Activated B cell treated with CpG ODN at 0.5 μM for 24 hours (primary cell): ENCODE measurements at regions of chr2 and their contacts with region 1.

Region 1: DNA sequence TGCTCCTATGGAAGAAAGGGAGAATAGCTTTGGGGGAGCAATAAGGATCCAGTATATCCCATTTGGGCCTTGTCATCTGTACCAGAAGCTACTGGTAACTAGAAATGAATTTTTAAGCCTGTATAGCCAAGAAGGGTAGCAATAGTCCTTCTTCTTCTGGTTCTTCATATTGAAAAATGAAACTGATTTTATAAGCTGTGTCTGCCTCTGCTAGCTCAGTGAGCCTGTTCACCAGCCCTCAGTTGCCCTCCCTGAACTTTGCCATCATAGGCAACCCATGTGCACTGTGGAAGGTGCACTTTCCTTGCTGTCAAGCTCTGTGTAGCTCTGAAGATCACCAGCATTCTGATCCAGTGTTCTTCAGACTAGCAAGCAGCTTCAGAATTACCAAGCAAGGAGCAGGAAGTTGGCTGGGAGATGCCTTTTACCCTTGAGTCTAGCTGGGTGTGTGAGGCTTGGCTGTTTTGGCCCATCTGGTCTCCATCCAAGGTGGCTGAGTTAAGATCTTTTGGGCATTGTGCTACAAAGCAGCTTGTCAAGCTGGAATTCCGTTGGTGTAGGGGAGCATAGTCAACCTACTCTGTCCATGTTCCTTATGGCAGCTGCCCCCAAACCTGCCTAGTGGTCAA is 55.8 kb upstream of the MGAT5 start:
- DNase-seq: no peak
- ATAC-seq: peak; percentile 25
- H3K4me3 Mint-ChIP-seq: peak overlapping the region; percentile 53
- H3K27ac Mint-ChIP-seq: peak overlapping the region; percentile 60
- H3K4me1 Mint-ChIP-seq: peaks cover 87% of the 10 kb centered on the region
- H3K27me3 Mint-ChIP-seq: no peaks in the 10 kb centered on the region
- CTCF ChIP-seq: no peak

Region 2: DNA sequence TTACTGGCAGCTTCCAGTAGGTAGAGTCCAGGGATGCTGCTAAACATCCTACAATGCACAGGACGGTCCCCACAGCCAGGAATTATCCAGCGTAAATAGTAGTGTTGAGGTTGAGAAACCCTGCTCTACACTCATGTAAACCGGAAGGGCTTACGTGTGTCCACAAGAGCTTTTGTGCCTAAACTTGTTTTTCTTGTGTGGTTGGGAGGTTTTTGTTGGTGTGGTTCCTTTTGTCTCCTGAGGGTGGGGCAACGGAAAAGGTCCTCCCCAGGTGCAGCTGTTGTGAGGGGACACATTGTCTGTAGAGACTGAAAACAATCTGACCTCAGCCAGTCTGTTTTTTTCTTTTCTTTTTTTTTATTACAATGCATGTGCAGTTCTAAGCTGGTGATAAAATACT is 16.9 kb before region 1 on chr2:
- CTCF ChIA-PET with region 1: no interaction called
- POLR2A ChIA-PET with region 1: no interaction called
- intact Hi-C with region 1: loop called (anchors 1 kb)
- DNase-seq: no peak
- ATAC-seq: peak; percentile 43
- H3K4me3 Mint-ChIP-seq: peak overlapping the region; percentile 35
- H3K27ac Mint-ChIP-seq: peak overlapping the region; percentile 84
- H3K4me1 Mint-ChIP-seq: peaks cover 93% of the 10 kb centered on the region
- H3K27me3 Mint-ChIP-seq: no peaks in the 10 kb centered on the region
- CTCF ChIP-seq: no peak